K562 (cell line): ENCODE measurements at regions of chr20 and their contacts with region 1.

Region 1: GRCh38 chr20:60057123-60057801 is 99.0 kb downstream of the CDH26 start:
- DNase-seq: peak; percentile 67 to 69 (median 68)
- ATAC-seq: peak; percentile 89
- H3K4me3 ChIP-seq: no peak overlapping the region
- H3K27ac ChIP-seq: no peak overlapping the region; the same call in 2 of the 3 replicates
- H3K4me1 ChIP-seq: peaks cover 5 to 7% of the 10 kb centered on the region in 2 experiments; a peak in 1 of 5 replicates
- H3K27me3 ChIP-seq: peaks cover 0 to 25% of the 10 kb centered on the region in 2 experiments; a peak in 2 of 5 replicates
- CTCF ChIP-seq: peak; percentile 75 to 85 (median 82)
- EP300 ChIP-seq: no peak
- POLR2A ChIP-seq: no peak
- RAD21 ChIP-seq: peak; percentile 59 to 69

Region 2: DNA sequence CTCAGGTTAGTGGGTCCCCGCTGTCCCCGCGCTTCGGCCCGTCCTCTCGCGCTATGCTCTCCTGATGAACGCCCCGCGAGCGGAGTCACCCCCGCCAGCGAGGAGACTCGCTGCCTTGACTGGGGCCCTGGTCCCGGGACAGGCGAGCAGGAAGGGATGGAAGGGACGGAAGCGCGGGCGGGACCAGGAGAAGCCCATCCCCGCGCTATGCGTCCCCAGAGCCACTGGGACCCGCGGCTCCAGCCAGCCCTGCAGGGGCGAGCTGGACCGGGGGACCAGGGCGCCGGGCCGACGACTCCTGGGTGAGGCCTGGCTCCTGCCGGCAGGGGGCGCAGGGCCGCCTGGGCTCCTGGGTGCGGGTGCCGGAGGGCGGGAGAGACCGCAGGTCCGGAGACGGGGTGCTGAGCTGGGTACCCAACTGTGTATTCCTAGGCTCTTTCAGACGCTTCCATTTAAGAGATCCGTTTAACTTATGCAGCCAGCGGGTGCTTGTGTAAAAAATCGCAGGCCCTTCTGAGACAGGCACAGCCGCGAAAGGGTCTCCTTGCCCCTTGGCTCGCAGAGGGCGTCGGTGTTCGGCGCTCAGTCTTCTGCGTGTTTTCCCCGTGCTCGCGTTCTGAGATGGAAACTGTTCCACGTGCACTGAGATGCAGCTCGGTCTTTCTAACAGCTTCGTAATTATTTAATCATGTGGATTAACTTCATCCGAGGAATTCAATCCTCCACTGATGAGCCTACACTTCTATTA is 123.2 kb before region 1 on chr20:
- CTCF ChIA-PET with region 1: no interaction called
- POLR2A ChIA-PET with region 1: no interaction called
- in situ Hi-C with region 1: no loop called
- intact Hi-C with region 1: no loop called
- DNase-seq: peak; percentile 86 to 91 (median 86)
- ATAC-seq: peak; percentile 99
- H3K4me3 ChIP-seq: peak overlapping the region; percentile 62
- H3K27ac ChIP-seq: peak overlapping the region; percentile 19; the same call in 1 of the 3 replicates
- H3K4me1 ChIP-seq: peaks cover 0 to 24% of the 10 kb centered on the region in 2 experiments; a peak in 2 of 5 replicates
- H3K27me3 ChIP-seq: no peaks in the 10 kb centered on the region
- CTCF ChIP-seq: peak; percentile 81 to 90 (median 87)
- EP300 ChIP-seq: no peak
- POLR2A ChIP-seq: no peak
- RAD21 ChIP-seq: peak; percentile 38 to 63

Region 3: GRCh38 chr20:60262967-60263603 is 205.8 kb after region 1 on chr20:
- CTCF ChIA-PET with region 1: interaction called, 4 read pairs
- POLR2A ChIA-PET with region 1: no interaction called
- in situ Hi-C with region 1: no loop called
- intact Hi-C with region 1: loop called (anchors 1 kb)
- DNase-seq: peak; percentile 57 to 75 (median 68)
- ATAC-seq: peak; percentile 80
- H3K4me3 ChIP-seq: no peak overlapping the region
- H3K27ac ChIP-seq: no peak overlapping the region
- H3K4me1 ChIP-seq: no peaks in the 10 kb centered on the region
- H3K27me3 ChIP-seq: no peaks in the 10 kb centered on the region; a peak in 1 of 5 replicates
- CTCF ChIP-seq: peak; percentile 68 to 87 (median 75)
- EP300 ChIP-seq: no peak
- POLR2A ChIP-seq: no peak
- RAD21 ChIP-seq: peak; percentile 21 to 52; a peak in 2 of 4 replicates

Region 4: DNA sequence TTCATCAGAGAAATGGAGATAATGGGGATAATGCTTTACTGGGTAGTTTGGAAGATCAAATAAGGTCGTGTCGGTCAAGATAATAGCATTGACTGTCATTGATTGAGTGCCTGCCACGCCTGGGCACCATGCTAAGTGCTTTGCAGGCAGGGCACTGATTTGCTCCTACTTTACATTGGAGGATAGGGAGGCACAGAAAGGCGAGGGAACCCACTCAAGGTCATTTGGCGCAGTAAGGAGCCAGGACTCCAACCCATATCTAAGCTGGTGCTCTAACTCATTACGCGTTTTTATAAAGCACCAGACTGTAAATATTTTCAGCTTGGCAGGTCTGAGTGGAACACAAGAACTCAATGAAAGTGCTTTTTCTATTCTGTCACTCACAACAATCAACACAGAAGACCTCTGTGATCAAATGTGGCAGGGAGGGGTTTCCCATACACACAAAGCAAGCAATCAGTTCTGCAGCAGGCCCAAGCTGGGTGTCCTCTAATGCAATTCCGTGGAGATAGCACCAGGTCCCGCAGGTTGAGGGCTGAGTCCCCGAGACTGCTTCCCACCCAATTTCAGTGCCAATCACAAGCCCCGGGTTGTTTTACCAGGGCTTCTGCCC is 274.5 kb after region 1 on chr20:
- CTCF ChIA-PET with region 1: no interaction called
- POLR2A ChIA-PET with region 1: no interaction called
- in situ Hi-C with region 1: no loop called
- intact Hi-C with region 1: no loop called
- DNase-seq: no peak
- ATAC-seq: no peak
- H3K4me3 ChIP-seq: no peak overlapping the region
- H3K27ac ChIP-seq: no peak overlapping the region
- H3K4me1 ChIP-seq: no peaks in the 10 kb centered on the region
- H3K27me3 ChIP-seq: no peaks in the 10 kb centered on the region
- CTCF ChIP-seq: no peak
- EP300 ChIP-seq: no peak
- POLR2A ChIP-seq: no peak
- RAD21 ChIP-seq: no peak

Region 5: DNA sequence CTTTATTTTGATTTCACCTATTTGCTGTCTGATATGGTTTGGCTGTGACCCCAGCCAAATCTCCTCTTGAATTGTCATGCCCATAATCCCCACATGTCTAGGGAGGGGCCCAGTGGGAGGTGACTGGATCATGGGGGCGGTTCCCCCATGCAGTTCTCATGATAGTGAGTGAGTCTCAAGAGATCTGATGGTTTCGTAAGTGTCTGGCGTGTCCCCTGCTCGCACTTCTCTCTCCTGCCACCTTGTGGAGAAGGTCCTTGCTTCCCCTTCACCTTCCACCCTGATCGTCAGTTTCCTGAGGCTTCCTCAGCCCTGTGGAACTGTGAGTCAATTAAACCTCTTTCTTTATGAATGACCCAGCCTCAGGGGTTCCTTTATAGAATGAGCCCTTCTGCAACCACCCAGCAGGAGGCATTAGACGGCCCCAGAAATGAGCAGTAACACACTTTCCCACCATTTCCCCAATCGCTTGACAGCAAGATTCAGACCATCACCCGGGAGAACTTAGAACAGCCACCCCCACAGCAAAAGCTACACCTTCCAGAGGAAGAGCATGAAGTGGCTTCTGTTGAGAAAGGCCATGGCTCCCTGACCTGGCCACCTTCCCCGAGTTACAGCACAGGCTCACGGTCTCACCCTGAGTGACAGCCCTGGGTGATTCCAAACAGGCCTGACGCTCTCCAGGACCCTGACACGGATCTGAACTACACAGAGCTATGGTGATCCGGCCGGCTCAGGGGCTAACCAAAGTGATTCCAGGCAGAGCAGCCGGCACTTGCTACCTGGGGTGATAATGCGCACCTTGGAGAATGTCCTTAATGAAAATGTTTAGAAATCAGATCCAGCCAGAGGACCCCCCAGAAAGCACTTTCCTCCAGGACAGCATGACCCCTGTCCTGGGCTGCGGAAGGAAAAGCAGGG is 1063.6 kb after region 1 on chr20:
- CTCF ChIA-PET with region 1: no interaction called
- POLR2A ChIA-PET with region 1: no interaction called
- in situ Hi-C with region 1: no loop called
- intact Hi-C with region 1: loop called (anchors 5 kb)
- DNase-seq: peak in 1 of 4 experiments; percentile 74
- ATAC-seq: peak; percentile 98
- H3K4me3 ChIP-seq: no peak overlapping the region
- H3K27ac ChIP-seq: no peak overlapping the region
- H3K4me1 ChIP-seq: no peaks in the 10 kb centered on the region
- H3K27me3 ChIP-seq: peaks cover 2 to 36% of the 10 kb centered on the region in 2 experiments; a peak in 3 of 5 replicates
- CTCF ChIP-seq: peak; percentile 58 to 66 (median 64)
- EP300 ChIP-seq: no peak
- POLR2A ChIP-seq: no peak
- RAD21 ChIP-seq: peak in 1 of 2 experiments; percentile 55; a peak in 3 of 4 replicates